Activated CD4-positive, alpha-beta T cell treated with anti-CD3 and anti-CD28 coated beads, Interleukin-2, amount 10 ng/mL, durations not matched to agents 24 days and 14 days (primary cell): ENCODE measurements at regions of chr3 and their contacts with region 1.

Region 1: DNA sequence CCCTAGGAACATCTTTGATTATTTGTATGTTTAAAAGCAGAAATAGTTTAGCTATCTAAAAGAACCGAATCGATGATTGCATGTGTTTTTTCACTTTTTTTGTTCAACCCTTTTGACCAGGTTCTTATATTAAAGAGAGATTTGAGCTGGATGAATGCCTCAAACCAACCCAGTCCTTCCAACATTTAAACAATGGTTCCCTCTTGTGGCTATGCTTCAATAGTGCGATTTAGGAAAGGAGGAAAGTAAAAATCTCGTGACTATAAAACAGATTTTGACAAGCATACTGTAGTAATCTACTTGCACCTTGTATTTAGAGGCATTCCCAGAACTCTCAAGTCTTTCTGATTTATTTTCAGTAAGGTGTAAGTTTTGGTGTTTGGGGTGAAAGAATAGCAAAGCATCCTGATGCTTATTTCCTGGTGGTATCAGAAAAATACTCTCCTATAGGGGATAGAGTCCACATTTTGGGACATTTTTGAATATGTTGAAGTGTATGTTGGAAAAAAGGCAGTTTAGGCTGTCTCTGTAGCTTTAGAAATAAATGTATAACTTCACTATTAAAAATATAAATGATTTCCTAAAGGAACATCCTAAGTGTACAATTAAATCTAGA is 159.6 kb upstream of the KCNH8 start:
- DNase-seq: peak; percentile 72
- H3K4me3 Mint-ChIP-seq: peak overlapping the region; percentile 83
- H3K27ac Mint-ChIP-seq: peak overlapping the region; percentile 81
- H3K4me1 Mint-ChIP-seq: peaks cover 24% of the 10 kb centered on the region
- H3K27me3 Mint-ChIP-seq: peaks cover 7% of the 10 kb centered on the region

Region 2: GRCh38 chr3:17894434-17895060 is 1094.2 kb before region 1 on chr3:
- intact Hi-C with region 1: loop called (anchors 2 kb)
- DNase-seq: peak; percentile 80
- H3K4me3 Mint-ChIP-seq: no peak overlapping the region
- H3K27ac Mint-ChIP-seq: no peak overlapping the region
- H3K4me1 Mint-ChIP-seq: no peaks in the 10 kb centered on the region
- H3K27me3 Mint-ChIP-seq: peaks cover 13% of the 10 kb centered on the region

Region 3: DNA sequence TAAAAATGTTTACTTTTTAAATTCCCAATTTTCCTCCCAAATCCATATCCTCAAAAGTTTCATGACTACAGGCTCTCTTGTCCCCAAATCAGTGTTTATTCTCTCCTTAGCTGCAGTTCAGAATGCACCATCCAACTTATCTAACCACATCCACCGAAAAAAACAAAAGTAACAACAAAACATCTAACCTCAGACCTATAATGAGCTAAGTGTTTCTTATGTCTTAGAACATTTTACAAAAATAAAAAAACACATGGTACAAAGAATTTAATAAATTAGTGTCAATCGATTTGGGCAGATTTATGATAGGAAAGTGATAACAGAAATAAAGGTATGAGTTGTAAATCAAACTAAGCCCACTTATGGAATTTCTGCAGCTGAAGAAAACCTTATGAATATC is 577.2 kb before region 1 on chr3:
- intact Hi-C with region 1: loop called (anchors 5 kb)
- DNase-seq: peak; percentile 62
- H3K4me3 Mint-ChIP-seq: peak overlapping the region; percentile 70
- H3K27ac Mint-ChIP-seq: peak overlapping the region; percentile 79
- H3K4me1 Mint-ChIP-seq: peaks cover 75% of the 10 kb centered on the region
- H3K27me3 Mint-ChIP-seq: no peaks in the 10 kb centered on the region

Region 4: GRCh38 chr3:18559331-18559842 is 429.3 kb before region 1 on chr3:
- intact Hi-C with region 1: loop called (anchors 2 kb)
- DNase-seq: peak; percentile 80
- H3K4me3 Mint-ChIP-seq: peak overlapping the region; percentile 64
- H3K27ac Mint-ChIP-seq: peak overlapping the region; percentile 97
- H3K4me1 Mint-ChIP-seq: peaks cover 65% of the 10 kb centered on the region
- H3K27me3 Mint-ChIP-seq: no peaks in the 10 kb centered on the region

Region 5: GRCh38 chr3:18679238-18679637 is 309.5 kb before region 1 on chr3:
- intact Hi-C with region 1: loop called (anchors 10 kb)
- DNase-seq: peak; percentile 87
- H3K4me3 Mint-ChIP-seq: peak overlapping the region; percentile 62
- H3K27ac Mint-ChIP-seq: peak overlapping the region; percentile 78
- H3K4me1 Mint-ChIP-seq: peaks cover 70% of the 10 kb centered on the region
- H3K27me3 Mint-ChIP-seq: no peaks in the 10 kb centered on the region

Region 6: DNA sequence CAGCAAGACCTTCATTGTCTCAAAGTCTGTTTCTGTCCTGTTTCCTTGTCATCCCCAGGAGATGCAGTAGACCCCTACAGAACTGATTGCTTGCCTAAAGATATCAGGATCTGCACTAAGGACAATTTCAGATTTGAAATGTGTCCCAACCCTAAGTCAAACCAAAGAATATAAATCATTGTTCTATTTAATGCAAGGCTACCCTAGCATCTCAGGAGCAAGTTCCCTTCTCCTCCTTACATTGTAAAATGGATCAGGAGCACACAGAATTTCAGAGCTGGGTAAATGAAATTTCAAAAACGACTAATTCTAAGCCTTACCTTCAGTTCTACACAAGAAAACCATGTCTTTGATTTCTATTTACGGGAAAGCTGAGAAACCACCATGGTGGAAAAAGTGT is 201.3 kb before region 1 on chr3:
- intact Hi-C with region 1: loop called (anchors 10 kb)
- DNase-seq: no peak
- H3K4me3 Mint-ChIP-seq: no peak overlapping the region
- H3K27ac Mint-ChIP-seq: no peak overlapping the region
- H3K4me1 Mint-ChIP-seq: peaks cover 6% of the 10 kb centered on the region
- H3K27me3 Mint-ChIP-seq: peaks cover 2% of the 10 kb centered on the region

Region 7: GRCh38 chr3:18872466-18872865 is 116.3 kb before region 1 on chr3:
- intact Hi-C with region 1: loop called (anchors 2 kb)
- DNase-seq: no peak
- H3K4me3 Mint-ChIP-seq: no peak overlapping the region
- H3K27ac Mint-ChIP-seq: no peak overlapping the region
- H3K4me1 Mint-ChIP-seq: peaks cover 32% of the 10 kb centered on the region
- H3K27me3 Mint-ChIP-seq: no peaks in the 10 kb centered on the region

Region 8: GRCh38 chr3:19093084-19093483 is 104.4 kb after region 1 on chr3:
- intact Hi-C with region 1: no loop called
- DNase-seq: no peak
- H3K4me3 Mint-ChIP-seq: no peak overlapping the region
- H3K27ac Mint-ChIP-seq: no peak overlapping the region
- H3K4me1 Mint-ChIP-seq: no peaks in the 10 kb centered on the region
- H3K27me3 Mint-ChIP-seq: peaks cover 2% of the 10 kb centered on the region